ENCODE measurements at regions of chr17 and their contacts with region 1.

Region 1: GRCh38 chr17:48878918-48879898 is 13.4 kb upstream of the ATP5MC1 start:
- DNase-seq: peak; percentile 68
- ATAC-seq: peak; percentile 83
- H3K4me3 Mint-ChIP-seq: no peak overlapping the region
- H3K27ac Mint-ChIP-seq: no peak overlapping the region
- H3K4me1 Mint-ChIP-seq: no peaks in the 10 kb centered on the region
- H3K27me3 Mint-ChIP-seq: no peaks in the 10 kb centered on the region
- CTCF ChIP-seq: peak; percentile 95

Region 2: GRCh38 chr17:48671697-48672171 is 207.5 kb before region 1 on chr17:
- CTCF ChIA-PET with region 1: interaction called, 119 read pairs
- POLR2A ChIA-PET with region 1: no interaction called
- DNase-seq: peak; percentile 87
- ATAC-seq: peak; percentile 96
- H3K4me3 Mint-ChIP-seq: peak overlapping the region; percentile 72
- H3K27ac Mint-ChIP-seq: no peak overlapping the region
- H3K4me1 Mint-ChIP-seq: peaks cover 12% of the 10 kb centered on the region
- H3K27me3 Mint-ChIP-seq: peaks cover 53% of the 10 kb centered on the region
- CTCF ChIP-seq: peak; percentile 79

Region 3: GRCh38 chr17:48724251-48725003 is 154.8 kb before region 1 on chr17:
- CTCF ChIA-PET with region 1: interaction called, 68 read pairs
- POLR2A ChIA-PET with region 1: interaction called, 5 read pairs
- DNase-seq: peak; percentile 86
- ATAC-seq: no peak
- H3K4me3 Mint-ChIP-seq: peak overlapping the region; percentile 70
- H3K27ac Mint-ChIP-seq: no peak overlapping the region
- H3K4me1 Mint-ChIP-seq: peaks cover 50% of the 10 kb centered on the region
- H3K27me3 Mint-ChIP-seq: peaks cover 100% of the 10 kb centered on the region
- CTCF ChIP-seq: peak; percentile 49; the same call in 1 of the 2 replicates

Region 4: DNA sequence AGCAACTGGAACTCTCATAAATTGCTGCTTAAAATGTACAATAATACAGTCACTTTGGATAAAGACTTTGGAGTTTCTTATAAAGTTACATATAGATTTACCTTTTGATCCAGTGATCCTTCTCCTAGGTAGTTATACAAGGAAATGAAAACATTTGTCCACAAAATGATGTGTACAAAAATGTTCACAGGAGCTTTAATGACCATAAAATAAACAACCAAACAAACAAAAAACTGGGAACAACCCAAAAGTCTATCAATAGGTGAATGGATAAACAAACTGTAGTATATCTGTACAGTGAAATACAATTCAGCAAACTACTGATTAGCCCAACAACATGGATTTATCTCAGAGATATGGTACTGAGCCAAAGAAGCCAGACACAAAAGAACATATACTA is 99.8 kb before region 1 on chr17:
- CTCF ChIA-PET with region 1: interaction called, 10 read pairs
- POLR2A ChIA-PET with region 1: no interaction called
- DNase-seq: no peak
- ATAC-seq: no peak
- H3K4me3 Mint-ChIP-seq: no peak overlapping the region
- H3K27ac Mint-ChIP-seq: no peak overlapping the region
- H3K4me1 Mint-ChIP-seq: no peaks in the 10 kb centered on the region
- H3K27me3 Mint-ChIP-seq: peaks cover 9% of the 10 kb centered on the region
- CTCF ChIP-seq: no peak

Region 5: DNA sequence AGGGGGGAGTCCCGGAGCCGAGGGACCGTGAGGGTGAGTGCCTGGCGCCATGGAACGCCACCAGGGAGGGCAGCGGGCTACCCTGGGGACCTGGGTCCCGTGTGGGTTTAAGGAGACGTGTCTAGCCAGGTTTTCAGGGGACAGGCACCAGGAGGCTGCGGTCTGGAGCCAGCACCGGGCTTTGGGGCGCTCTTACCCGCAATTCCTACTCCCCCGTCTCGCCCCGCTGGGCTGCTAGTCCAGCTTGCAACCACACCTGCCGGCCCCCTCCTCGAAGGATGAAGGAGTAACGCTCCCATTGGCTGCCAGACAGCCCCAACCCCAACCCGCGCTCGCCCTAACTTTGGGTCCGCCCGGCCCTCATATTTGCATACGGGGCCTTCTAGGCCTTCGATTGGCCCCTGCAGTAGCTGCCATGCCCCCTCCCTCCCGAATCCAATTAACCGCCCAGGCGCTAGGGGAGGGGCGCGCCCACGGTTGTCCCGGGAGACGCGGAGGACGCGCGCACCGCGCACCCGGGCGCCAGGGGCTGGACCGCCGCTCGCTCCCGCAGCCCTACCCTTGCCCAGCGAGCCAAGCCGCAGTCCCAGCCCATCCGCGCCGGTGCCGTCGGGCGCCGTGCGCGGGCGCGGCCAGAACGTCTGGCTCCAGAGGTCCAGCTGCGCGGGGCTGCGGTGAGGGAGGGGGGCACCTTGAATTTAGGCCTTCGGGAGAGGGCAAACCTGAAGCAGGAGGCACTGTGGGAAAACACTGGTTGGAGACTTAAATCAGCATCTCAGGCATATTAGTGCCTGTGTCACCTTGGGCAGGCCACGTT is 62.2 kb before region 1 on chr17 and contains the start of gene TTLL6:
- CTCF ChIA-PET with region 1: interaction called, 355 read pairs
- POLR2A ChIA-PET with region 1: interaction called, 4 read pairs
- DNase-seq: peak; percentile 97
- ATAC-seq: peak; percentile 95
- H3K4me3 Mint-ChIP-seq: peak within 1 kb of the TSS; percentile 94
- H3K27ac Mint-ChIP-seq: peak within 1 kb of the TSS; percentile 92
- H3K4me1 Mint-ChIP-seq: peaks cover 44% of the 10 kb centered on the region
- H3K27me3 Mint-ChIP-seq: peaks cover 5% of the 10 kb centered on the region; the same call in 1 of the 2 replicates
- CTCF ChIP-seq: no peak
- total RNA-seq, gene TTLL6: 3.4 to 7.0 TPM (median 4.6 TPM) in 3 replicates

Region 6: DNA sequence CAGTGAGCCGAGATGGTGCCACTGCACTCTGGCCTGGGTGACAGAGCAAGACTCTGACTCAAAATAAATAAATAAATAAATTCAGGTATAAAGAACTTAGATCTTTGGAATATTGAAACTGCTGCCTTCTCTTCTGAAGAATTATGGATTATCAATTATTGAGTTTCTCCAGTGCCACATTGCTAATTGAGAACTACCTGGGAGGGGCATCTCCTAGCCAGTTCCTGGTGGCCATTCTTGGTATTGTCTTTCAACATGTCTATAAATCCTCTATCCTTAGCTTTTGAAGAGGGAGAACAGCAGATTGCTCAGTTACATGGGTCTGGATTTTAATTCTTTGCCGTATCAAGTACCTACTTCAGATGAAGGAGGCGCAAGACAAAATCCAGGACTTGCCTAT is 19.2 kb before region 1 on chr17:
- CTCF ChIA-PET with region 1: interaction called, 15 read pairs
- POLR2A ChIA-PET with region 1: no interaction called
- DNase-seq: no peak
- ATAC-seq: peak; percentile 55
- H3K4me3 Mint-ChIP-seq: no peak overlapping the region
- H3K27ac Mint-ChIP-seq: no peak overlapping the region
- H3K4me1 Mint-ChIP-seq: 0 out of 2 replicates have a peak, but pooled peaks cover 9% of the 10 kb centered on the region
- H3K27me3 Mint-ChIP-seq: no peaks in the 10 kb centered on the region
- CTCF ChIP-seq: no peak

Measured in WTC11 (cell line).